Right ventricle myocardium inferior (tissue), 1 donor: ENCODE measurements at regions of chr1 and their contacts with region 1.

Region 1: GRCh38 chr1:225777583-225778336 is at the start of gene SRP9:
- DNase-seq: peak; percentile 99
- ATAC-seq: peak; percentile 100
- total RNA-seq, gene SRP9: 192 TPM

Region 2: GRCh38 chr1:225809842-225810578 is 32.2 kb after region 1 on chr1 and contains the start of gene EPHX1:
- intact Hi-C with region 1: loop called (anchors 2 kb)
- DNase-seq: peak; percentile 94
- ATAC-seq: peak; percentile 91
- total RNA-seq, gene EPHX1: 76.0 TPM

Region 3: GRCh38 chr1:226863446-226863845 is 1085.7 kb after region 1 on chr1:
- intact Hi-C with region 1: loop called (anchors 10 kb)
- DNase-seq: no peak
- ATAC-seq: no peak